CD8-positive, alpha-beta T cell (primary cell): ENCODE measurements at regions of chr12 and their contacts with region 1.

Region 1: GRCh38 chr12:6613776-6614512 is 6.8 kb upstream of the CHD4 start:
- DNase-seq: peak in 7 of 9 experiments; percentile 36 to 90 (median 67)
- ATAC-seq: peak; percentile 43
- H3K4me3 ChIP-seq: no peak overlapping the region
- H3K4me3 Mint-ChIP-seq: no peak overlapping the region
- H3K27ac ChIP-seq: peak overlapping the region in 1 of 2 experiments; percentile 77
- H3K27ac Mint-ChIP-seq: peak overlapping the region; percentile 90
- H3K4me1 ChIP-seq: peaks cover 37% of the 10 kb centered on the region
- H3K4me1 Mint-ChIP-seq: peaks cover 55% of the 10 kb centered on the region
- H3K27me3 ChIP-seq: no peaks in the 10 kb centered on the region
- H3K27me3 Mint-ChIP-seq: no peaks in the 10 kb centered on the region
- CTCF ChIP-seq: no peak

Region 2: DNA sequence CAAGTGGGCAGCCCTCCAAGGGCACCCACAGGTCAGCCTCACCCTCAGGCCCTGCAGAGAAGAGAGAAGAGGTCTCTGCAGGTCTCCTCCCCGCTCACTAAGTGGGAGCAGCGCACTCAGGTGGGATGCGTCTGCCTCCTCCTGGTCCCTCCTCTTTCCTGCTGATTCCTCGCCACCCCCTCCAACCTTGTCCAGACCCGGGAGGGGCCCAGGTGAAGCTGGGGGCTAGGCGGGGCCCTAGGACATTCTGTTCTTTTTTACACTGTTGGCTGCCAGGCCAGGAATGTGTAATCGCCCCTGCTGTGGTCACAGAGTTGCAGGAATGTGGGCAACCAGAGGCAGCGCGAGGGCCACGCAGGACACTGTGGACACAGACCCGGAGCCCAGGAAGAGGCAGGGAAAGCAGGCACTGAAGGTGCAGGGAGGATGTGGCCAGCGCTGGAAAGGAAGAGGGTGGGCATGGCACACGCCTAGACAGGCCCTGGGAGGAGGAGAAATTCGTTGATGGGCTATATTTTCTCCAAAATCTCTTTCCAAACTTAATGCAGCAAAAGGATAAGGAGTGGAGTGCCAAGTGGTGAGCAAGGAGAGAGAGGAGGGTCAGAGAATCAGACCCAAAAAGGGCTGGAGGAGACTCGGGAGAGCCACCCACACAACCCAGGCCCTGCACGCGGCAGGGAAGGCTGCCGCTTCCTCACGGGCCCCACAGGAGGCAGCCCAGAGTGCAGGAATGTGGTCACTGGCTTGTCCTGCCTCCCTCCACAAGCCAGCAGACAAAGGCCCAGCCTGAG is 237.7 kb before region 1 on chr12:
- CTCF ChIA-PET with region 1: no interaction called
- POLR2A ChIA-PET with region 1: no interaction called
- intact Hi-C with region 1: no loop called
- DNase-seq: no peak
- ATAC-seq: peak; percentile 59
- H3K4me3 ChIP-seq: peak overlapping the region in 1 of 2 experiments; percentile 14
- H3K4me3 Mint-ChIP-seq: peak overlapping the region; percentile 71
- H3K27ac ChIP-seq: peak overlapping the region in 1 of 2 experiments; percentile 12
- H3K27ac Mint-ChIP-seq: peak overlapping the region; percentile 76
- H3K4me1 ChIP-seq: peaks cover 21% of the 10 kb centered on the region
- H3K4me1 Mint-ChIP-seq: peaks cover 33% of the 10 kb centered on the region
- H3K27me3 ChIP-seq: no peaks in the 10 kb centered on the region
- H3K27me3 Mint-ChIP-seq: peaks cover 5% of the 10 kb centered on the region
- CTCF ChIP-seq: no peak

Region 3: GRCh38 chr12:6507102-6507998 is 106.6 kb before region 1 on chr12:
- CTCF ChIA-PET with region 1: no interaction called
- POLR2A ChIA-PET with region 1: no interaction called
- intact Hi-C with region 1: no loop called
- DNase-seq: no peak
- ATAC-seq: no peak
- H3K4me3 ChIP-seq: no peak overlapping the region
- H3K4me3 Mint-ChIP-seq: no peak overlapping the region
- H3K27ac ChIP-seq: no peak overlapping the region
- H3K27ac Mint-ChIP-seq: no peak overlapping the region
- H3K4me1 ChIP-seq: no peaks in the 10 kb centered on the region
- H3K4me1 Mint-ChIP-seq: peaks cover 7% of the 10 kb centered on the region
- H3K27me3 ChIP-seq: no peaks in the 10 kb centered on the region
- H3K27me3 Mint-ChIP-seq: no peaks in the 10 kb centered on the region
- CTCF ChIP-seq: no peak

Region 4: DNA sequence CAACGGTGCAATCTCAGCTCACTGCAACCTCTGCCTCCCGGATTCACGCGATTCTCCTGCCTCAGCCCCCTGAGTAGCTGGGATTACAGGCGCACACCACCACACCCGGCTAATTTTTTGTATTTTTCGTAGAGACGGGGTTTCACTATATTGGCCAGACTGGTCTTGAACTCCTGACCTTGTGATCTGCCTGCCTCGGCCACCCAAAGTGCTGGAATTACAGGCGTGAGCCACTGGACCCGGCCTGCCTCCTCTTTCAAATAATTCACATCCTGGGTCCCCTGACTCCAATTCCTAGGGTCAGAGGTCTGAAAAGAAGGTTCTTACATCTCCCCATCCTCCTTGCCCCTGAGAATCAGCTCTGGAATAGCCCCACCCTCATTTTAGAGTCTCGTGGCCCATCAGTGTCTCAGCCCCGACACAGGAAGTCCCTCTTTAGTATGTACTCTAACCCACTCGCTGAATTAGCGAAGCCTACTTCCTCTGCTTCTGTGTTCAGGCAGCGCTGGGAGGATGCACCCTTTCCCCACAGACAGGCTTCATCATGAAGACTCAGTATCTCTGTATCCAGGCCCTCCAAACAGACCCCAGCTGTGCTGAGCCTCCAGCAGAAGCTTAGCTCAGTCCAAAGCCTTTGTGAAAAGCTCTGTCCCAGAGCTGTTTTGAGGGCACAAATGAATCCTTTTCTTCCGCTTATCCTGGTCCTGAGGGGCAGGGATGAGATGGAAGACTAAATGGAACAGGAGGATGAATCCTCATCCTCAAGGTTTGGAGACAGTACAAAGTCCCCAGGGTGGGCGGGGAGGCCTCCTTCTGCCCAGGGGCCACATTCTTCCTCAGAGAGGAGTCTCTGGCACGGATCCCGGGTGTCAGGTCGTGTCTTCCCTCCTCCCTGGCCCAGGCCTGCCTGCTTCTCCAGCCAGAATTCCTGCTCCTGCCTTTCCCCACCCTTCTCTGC is 18.4 kb after region 1 on chr12:
- CTCF ChIA-PET with region 1: interaction called, 28 read pairs
- POLR2A ChIA-PET with region 1: interaction called, 12 read pairs
- intact Hi-C with region 1: loop called in 1 of 2 experiments (anchors 1 kb)
- DNase-seq: peak in 8 of 9 experiments; percentile 46 to 83 (median 66)
- ATAC-seq: peak; percentile 57
- H3K4me3 ChIP-seq: peak overlapping the region; percentile 58 to 68
- H3K4me3 Mint-ChIP-seq: peak overlapping the region; percentile 83
- H3K27ac ChIP-seq: peak overlapping the region; percentile 60 to 87
- H3K27ac Mint-ChIP-seq: peak overlapping the region; percentile 98
- H3K4me1 ChIP-seq: peaks cover 70% of the 10 kb centered on the region
- H3K4me1 Mint-ChIP-seq: peaks cover 66% of the 10 kb centered on the region
- H3K27me3 ChIP-seq: no peaks in the 10 kb centered on the region
- H3K27me3 Mint-ChIP-seq: no peaks in the 10 kb centered on the region
- CTCF ChIP-seq: no peak

Region 5: GRCh38 chr12:6644903-6645302 is 31.0 kb after region 1 on chr12:
- CTCF ChIA-PET with region 1: interaction called, 18 read pairs
- POLR2A ChIA-PET with region 1: interaction called, 4 read pairs
- intact Hi-C with region 1: loop called in 1 of 2 experiments (anchors 1 kb)
- DNase-seq: peak in 2 of 9 experiments; percentile 32 to 43
- ATAC-seq: no peak
- H3K4me3 ChIP-seq: no peak overlapping the region
- H3K4me3 Mint-ChIP-seq: no peak overlapping the region
- H3K27ac ChIP-seq: no peak overlapping the region
- H3K27ac Mint-ChIP-seq: no peak overlapping the region
- H3K4me1 ChIP-seq: peaks cover 5% of the 10 kb centered on the region
- H3K4me1 Mint-ChIP-seq: peaks cover 13% of the 10 kb centered on the region
- H3K27me3 ChIP-seq: no peaks in the 10 kb centered on the region
- H3K27me3 Mint-ChIP-seq: no peaks in the 10 kb centered on the region
- CTCF ChIP-seq: no peak